Naive thymus-derived CD8-positive, alpha-beta T cell (primary cell): ENCODE measurements at regions of chr5 and their contacts with region 1.

Region 1: DNA sequence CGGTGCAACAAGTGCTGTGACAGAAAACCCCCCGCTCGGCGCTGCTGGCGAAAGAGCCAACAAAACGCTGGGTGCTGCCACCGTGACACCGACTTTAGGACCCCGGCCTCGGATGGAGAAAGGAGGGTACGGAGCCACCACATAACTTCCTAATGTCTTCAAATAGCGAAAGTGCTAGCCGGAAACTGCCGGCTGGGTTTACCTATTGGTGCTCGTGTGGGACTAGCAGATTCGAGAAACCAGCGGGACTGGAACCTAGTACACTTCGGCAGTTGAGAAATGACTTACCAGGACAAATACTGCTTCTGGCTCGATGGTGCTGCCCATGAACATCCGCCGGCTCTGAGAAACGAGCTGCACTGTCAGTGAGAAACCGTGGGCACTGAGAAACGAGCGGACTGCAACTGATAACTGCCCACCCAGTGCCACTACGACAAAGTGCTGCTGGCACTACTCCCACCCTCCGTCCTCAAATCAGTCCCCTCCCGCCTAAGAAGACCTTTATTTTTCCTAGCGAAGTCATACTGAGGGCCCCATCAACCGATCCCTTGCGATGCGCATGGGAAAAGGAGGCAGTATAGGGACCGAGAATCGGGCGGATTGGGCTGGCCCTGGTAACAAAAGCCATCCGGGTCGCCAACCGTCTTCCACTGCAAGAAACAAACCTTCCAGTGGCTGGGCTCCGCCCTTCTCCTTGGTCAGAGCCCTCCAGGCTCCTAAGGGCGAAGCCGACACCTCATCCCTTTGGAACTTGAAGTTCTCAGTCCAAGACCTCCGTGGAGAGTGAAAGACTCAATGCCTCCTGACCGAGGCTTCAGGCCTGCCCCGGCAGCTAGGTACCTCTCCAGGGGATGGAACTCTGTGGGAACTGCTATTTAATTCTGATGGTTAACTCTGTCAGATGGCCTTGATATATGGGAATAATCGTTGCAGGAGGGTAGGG is 27.0 kb upstream of the ANXA2R start:
- DNase-seq: peak; percentile 72 to 99 (median 91)
- ATAC-seq: peak; percentile 42 to 53
- H3K4me3 Mint-ChIP-seq: peak overlapping the region; percentile 94 to 99 (median 98)
- H3K27ac Mint-ChIP-seq: peak overlapping the region; percentile 95 to 100 (median 100)
- H3K4me1 Mint-ChIP-seq: peaks cover 24 to 61% (median 55%) of the 10 kb centered on the region in 4 donors
- H3K27me3 Mint-ChIP-seq: no peaks in the 10 kb centered on the region

Region 2: GRCh38 chr5:42656651-42657015 is 410.4 kb before region 1 on chr5:
- POLR2A ChIA-PET with region 1: no interaction called
- DNase-seq: no peak
- ATAC-seq: no peak
- H3K4me3 Mint-ChIP-seq: no peak overlapping the region
- H3K27ac Mint-ChIP-seq: no peak overlapping the region
- H3K4me1 Mint-ChIP-seq: no peaks in the 10 kb centered on the region
- H3K27me3 Mint-ChIP-seq: peaks cover 4 to 17% (median 13%) of the 10 kb centered on the region in 5 donors

Region 3: DNA sequence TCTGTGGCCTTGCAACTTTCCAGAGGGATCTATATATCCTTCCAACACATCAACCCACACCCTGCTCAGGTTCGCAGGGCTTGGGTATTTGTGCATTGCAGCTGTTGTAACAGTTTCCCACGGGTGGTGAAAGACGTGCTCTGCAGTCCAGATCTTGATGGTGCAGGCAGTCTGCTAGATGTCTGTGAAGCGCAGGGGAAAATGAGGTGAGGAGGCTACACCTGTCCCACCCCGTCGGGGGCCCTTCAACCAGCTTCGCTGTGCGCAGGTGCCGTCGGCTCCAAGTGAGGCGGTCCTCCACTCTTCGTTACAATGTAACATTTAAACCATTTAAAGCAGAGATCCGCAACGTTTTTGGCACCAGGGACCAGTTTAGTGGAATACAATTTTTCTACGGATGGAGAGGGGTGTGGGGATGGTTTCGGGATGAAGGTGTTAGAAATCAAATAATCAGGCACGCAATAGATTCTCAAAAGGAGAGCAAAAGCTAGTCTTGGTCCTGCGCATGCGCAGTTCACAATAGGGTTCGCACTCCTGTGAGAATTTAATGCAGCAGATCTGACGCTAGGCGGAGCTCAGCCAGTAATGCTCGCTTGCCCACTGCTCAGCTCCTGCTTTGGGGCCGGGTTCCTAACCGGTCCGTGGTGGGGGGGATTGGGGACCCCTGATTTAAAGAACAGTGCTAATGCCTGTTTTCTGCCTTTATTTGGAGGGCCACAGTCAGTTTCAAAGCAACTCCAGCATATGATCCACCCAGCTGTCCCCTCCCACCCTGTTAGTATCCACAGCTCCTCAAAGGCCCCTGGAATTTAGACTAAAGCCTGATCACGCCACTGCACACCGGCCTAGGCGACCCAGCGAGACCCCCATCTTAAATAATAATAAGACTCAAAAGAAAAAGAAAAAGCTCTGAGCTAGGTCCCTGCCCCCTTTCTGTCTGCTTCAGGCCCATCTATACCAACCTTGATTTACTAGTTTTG is 158.3 kb before region 1 on chr5:
- POLR2A ChIA-PET with region 1: interaction called, 44 read pairs
- DNase-seq: peak; percentile 78 to 96 (median 90)
- ATAC-seq: peak; percentile 92 to 93
- H3K4me3 Mint-ChIP-seq: peak overlapping the region; percentile 82 to 98 (median 94)
- H3K27ac Mint-ChIP-seq: peak overlapping the region; percentile 89 to 98 (median 97)
- H3K4me1 Mint-ChIP-seq: peaks cover 2 to 22% (median 18%) of the 10 kb centered on the region in 4 donors
- H3K27me3 Mint-ChIP-seq: peaks cover 0 to 3% (median 0%) of the 10 kb centered on the region in 5 donors

Region 4: DNA sequence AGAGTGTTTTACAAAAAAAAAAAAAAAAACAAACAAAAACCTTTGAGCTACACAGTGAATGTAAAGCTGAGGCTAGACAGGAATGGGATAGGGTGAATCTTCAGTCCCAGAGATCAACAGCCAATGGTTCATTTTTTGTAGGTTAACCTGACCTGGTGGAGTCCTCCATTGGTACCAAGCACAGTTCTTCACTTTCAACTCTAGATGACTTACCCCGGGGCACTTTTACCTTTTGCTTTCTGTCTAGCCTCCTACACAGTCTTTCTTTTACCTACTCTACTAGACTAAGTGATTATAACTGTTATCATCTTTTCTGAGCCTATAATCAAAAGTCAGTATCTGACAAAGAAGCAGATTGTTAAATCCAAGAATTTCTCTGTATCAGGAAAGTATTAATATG is 77.9 kb before region 1 on chr5:
- POLR2A ChIA-PET with region 1: interaction called, 266 read pairs
- DNase-seq: peak in 3 of 10 donors; percentile 27 to 41 (median 35)
- ATAC-seq: no peak
- H3K4me3 Mint-ChIP-seq: peak overlapping the region; percentile 85 to 100 (median 100)
- H3K27ac Mint-ChIP-seq: peak overlapping the region; percentile 83 to 100 (median 100)
- H3K4me1 Mint-ChIP-seq: peaks cover 28 to 69% (median 65%) of the 10 kb centered on the region in 4 donors
- H3K27me3 Mint-ChIP-seq: no peaks in the 10 kb centered on the region

Region 5: GRCh38 chr5:43008369-43009153 is 58.5 kb before region 1 on chr5:
- POLR2A ChIA-PET with region 1: interaction called, 185 read pairs
- DNase-seq: peak; percentile 80 to 96 (median 91)
- ATAC-seq: peak; percentile 63 to 71
- H3K4me3 Mint-ChIP-seq: peak overlapping the region; percentile 83 to 99 (median 94)
- H3K27ac Mint-ChIP-seq: peak overlapping the region; percentile 92 to 100 (median 99)
- H3K4me1 Mint-ChIP-seq: peaks cover 17 to 40% (median 28%) of the 10 kb centered on the region in 4 donors
- H3K27me3 Mint-ChIP-seq: no peaks in the 10 kb centered on the region

Region 6: GRCh38 chr5:43019614-43020293 is 47.3 kb before region 1 on chr5:
- POLR2A ChIA-PET with region 1: interaction called, 271 read pairs
- DNase-seq: peak; percentile 68 to 94 (median 86)
- ATAC-seq: peak; percentile 65 to 67
- H3K4me3 Mint-ChIP-seq: peak overlapping the region; percentile 94 to 99 (median 98)
- H3K27ac Mint-ChIP-seq: peak overlapping the region; percentile 97 to 100 (median 100)
- H3K4me1 Mint-ChIP-seq: peaks cover 19 to 44% (median 40%) of the 10 kb centered on the region in 4 donors
- H3K27me3 Mint-ChIP-seq: no peaks in the 10 kb centered on the region

Region 7: DNA sequence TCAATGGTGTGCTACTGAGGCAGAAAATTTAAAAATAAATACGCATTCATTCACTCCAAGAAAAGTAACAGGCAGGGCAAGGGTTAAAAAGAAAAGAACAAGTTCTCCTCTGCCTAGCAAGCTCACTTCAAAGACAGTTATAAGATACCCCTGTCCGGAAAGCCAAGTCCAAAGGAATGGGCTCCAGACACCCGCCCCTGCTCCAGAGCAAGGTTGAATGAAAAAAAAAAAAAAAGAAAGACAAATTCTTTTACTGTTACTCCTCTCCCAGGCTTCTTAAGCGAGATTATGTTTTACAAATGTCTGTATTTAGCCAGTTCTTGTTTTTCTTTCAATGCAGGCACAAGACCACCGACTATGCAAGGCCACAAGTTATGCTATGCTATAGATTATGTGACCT is 17.8 kb before region 1 on chr5:
- POLR2A ChIA-PET with region 1: interaction called, 619 read pairs
- DNase-seq: no peak
- ATAC-seq: no peak
- H3K4me3 Mint-ChIP-seq: no peak overlapping the region
- H3K27ac Mint-ChIP-seq: peak overlapping the region in 5 of 10 donors; percentile 11 to 77 (median 69)
- H3K4me1 Mint-ChIP-seq: peaks cover 12 to 43% (median 35%) of the 10 kb centered on the region in 4 donors
- H3K27me3 Mint-ChIP-seq: no peaks in the 10 kb centered on the region

Region 8: DNA sequence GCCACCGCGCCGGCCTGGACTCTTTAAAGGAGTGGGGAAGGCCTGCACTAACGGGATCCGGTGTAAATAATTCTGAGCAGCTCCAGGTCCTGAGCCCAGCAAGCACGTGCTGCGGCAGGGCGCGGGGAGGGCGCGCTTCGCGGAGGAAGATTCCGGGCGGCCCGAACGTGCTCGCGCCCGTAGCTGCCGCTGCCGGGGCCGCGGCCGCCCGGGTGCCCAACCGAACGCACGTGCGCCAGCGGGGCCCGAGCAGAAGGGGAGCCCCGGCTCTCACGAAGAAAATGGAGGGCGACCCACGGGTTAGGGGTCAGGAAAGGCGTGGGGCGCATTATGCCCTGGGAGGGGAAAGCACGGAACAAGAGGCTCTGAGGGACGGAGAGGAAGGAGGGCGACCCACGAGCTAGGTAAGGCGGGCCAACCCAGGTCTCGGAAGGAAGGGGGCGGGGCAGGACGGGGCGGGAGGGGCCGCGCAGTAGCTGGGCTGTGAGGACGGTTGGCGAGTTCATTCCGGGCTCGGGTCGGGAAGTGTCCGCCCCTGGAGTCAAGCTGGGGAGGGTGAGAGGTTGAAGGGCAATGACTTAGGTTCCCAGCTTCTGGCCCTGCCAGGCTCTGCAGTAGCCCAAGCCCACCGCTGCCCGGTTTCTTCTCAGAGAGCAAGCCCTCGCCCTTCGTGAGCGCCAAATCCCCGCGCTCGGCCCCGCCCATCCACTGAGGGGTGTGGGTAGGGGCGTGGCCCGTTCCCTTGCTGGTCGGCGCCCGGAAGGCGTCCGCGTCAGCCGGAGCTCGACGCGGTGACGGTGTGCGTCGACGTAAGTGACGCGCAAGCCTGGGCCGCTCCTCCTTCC is 53.9 kb after region 1 on chr5 and contains the start of gene ZNF131:
- POLR2A ChIA-PET with region 1: interaction called, 126 read pairs
- DNase-seq: peak; percentile 95 to 99 (median 97)
- ATAC-seq: peak; percentile 77 to 86
- H3K4me3 Mint-ChIP-seq: peak within 1 kb of the TSS; percentile 89 to 100 (median 94)
- H3K27ac Mint-ChIP-seq: peak within 1 kb of the TSS; percentile 93 to 99 (median 98)
- H3K4me1 Mint-ChIP-seq: peaks cover 15 to 45% (median 39%) of the 10 kb centered on the region in 4 donors
- H3K27me3 Mint-ChIP-seq: no peaks in the 10 kb centered on the region
- polyA plus RNA-seq, gene ZNF131: 51.8 to 57.1 (median 55.5) TPM

Region 9: DNA sequence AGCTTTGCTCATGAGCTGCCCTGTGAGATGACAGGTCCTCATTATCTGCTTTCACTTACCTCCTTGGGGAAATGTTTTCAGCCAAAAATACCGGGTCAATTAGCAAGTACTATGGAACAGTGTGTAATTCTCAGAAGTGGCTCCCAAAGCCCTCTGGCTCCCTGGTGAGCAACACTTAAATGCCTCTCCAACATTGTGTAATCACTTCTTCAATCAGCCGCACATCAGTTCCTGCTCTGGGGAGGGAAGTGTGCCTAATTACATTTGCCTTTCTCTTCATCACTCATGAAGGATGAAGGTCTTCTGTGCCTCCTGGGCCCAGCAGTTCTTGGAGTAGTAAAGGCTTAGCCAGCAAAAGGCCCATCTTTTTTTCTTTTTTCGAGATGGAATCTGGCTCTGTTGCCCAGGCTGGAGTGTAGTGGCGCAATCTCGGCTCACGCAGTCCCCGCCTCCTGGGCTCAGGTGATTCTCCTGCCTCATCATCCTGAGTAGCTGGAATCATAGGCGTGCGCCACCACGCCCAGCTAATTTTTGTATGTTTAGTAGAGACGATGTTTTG is 148.1 kb after region 1 on chr5:
- POLR2A ChIA-PET with region 1: no interaction called
- DNase-seq: no peak
- ATAC-seq: no peak
- H3K4me3 Mint-ChIP-seq: no peak overlapping the region
- H3K27ac Mint-ChIP-seq: no peak overlapping the region
- H3K4me1 Mint-ChIP-seq: no peaks in the 10 kb centered on the region
- H3K27me3 Mint-ChIP-seq: peaks cover 0 to 13% (median 2%) of the 10 kb centered on the region in 5 donors